ENCODE measurements at regions of chr7 and their contacts with region 1.

Region 1: GRCh38 chr7:81284576-81284975 is 365.7 kb upstream of the SEMA3C start:
- DNase-seq: no peak
- ATAC-seq: no peak
- H3K4me3 ChIP-seq: no peak overlapping the region
- H3K27ac ChIP-seq: no peak overlapping the region
- H3K4me1 ChIP-seq: no peaks in the 10 kb centered on the region
- H3K27me3 ChIP-seq: no peaks in the 10 kb centered on the region

Region 2: DNA sequence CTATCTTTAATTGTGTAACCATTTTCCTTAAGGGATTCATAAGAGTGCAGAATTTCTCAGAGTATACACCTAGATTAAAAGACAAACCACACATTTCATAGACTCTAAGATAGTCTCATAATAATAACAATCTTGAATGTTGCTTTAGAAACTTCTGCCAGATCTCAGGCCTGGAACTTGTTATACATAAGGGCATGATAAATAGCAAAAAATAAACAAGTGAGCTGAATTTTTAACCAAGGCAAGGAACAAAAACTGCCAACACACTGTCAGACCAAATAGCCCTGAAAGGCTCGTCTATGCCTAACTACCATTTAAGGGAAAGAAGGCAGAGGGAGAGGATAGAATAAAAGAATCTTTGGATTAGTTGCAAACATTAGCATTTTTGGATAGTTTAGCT is 300.0 kb before region 1 on chr7:
- intact Hi-C with region 1: no loop called
- DNase-seq: no peak
- ATAC-seq: no peak
- H3K4me3 ChIP-seq: no peak overlapping the region
- H3K27ac ChIP-seq: no peak overlapping the region
- H3K4me1 ChIP-seq: no peaks in the 10 kb centered on the region
- H3K27me3 ChIP-seq: no peaks in the 10 kb centered on the region

Region 3: DNA sequence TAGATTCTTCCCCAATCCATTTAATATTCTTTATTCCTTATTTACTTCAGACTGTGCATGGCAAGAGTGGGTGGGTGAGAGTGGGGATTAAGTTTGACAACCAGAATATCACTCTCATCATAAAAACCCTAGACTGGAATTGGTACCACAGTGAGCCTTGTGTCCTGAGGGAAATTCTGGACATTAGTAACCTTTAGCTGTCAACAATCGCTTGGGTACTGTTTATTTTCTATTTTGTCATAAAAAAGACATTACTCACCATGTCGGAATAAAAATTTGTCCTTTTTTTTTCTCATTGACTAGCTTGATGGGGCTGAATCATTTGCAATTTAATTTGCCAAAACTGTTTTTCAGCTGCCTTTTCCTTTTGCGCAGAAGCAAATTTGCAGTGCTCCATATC is 189.6 kb before region 1 on chr7:
- intact Hi-C with region 1: loop called in 1 of 4 experiments (anchors 5 kb)
- DNase-seq: no peak
- ATAC-seq: no peak
- H3K4me3 ChIP-seq: no peak overlapping the region
- H3K27ac ChIP-seq: no peak overlapping the region
- H3K4me1 ChIP-seq: no peaks in the 10 kb centered on the region
- H3K27me3 ChIP-seq: no peaks in the 10 kb centered on the region